Endothelial cell of umbilical vein (primary cell): ENCODE measurements at regions of chr1 and their contacts with region 1.

Region 1: GRCh38 chr1:182781841-182782586 is 7.6 kb upstream of the NPL start:
- DNase-seq: peak; percentile 14
- H3K4me3 ChIP-seq: no peak overlapping the region
- H3K27ac ChIP-seq: no peak overlapping the region
- H3K4me1 ChIP-seq: no peaks in the 10 kb centered on the region
- H3K27me3 ChIP-seq: peaks cover 10 to 20% of the 10 kb centered on the region in 2 experiments
- CTCF ChIP-seq: peak; percentile 41
- POLR2A ChIP-seq: no peak

Region 2: GRCh38 chr1:182446033-182446669 is 335.9 kb before region 1 on chr1:
- CTCF ChIA-PET with region 1: interaction called, 6 read pairs
- POLR2A ChIA-PET with region 1: no interaction called
- dilution Hi-C with region 1: no loop called
- intact Hi-C with region 1: loop called (anchors 1 kb)
- DNase-seq: peak; percentile 38
- H3K4me3 ChIP-seq: no peak overlapping the region
- H3K27ac ChIP-seq: no peak overlapping the region
- H3K4me1 ChIP-seq: no peaks in the 10 kb centered on the region
- H3K27me3 ChIP-seq: no peaks in the 10 kb centered on the region
- CTCF ChIP-seq: peak; percentile 48 to 55
- POLR2A ChIP-seq: no peak

Region 3: DNA sequence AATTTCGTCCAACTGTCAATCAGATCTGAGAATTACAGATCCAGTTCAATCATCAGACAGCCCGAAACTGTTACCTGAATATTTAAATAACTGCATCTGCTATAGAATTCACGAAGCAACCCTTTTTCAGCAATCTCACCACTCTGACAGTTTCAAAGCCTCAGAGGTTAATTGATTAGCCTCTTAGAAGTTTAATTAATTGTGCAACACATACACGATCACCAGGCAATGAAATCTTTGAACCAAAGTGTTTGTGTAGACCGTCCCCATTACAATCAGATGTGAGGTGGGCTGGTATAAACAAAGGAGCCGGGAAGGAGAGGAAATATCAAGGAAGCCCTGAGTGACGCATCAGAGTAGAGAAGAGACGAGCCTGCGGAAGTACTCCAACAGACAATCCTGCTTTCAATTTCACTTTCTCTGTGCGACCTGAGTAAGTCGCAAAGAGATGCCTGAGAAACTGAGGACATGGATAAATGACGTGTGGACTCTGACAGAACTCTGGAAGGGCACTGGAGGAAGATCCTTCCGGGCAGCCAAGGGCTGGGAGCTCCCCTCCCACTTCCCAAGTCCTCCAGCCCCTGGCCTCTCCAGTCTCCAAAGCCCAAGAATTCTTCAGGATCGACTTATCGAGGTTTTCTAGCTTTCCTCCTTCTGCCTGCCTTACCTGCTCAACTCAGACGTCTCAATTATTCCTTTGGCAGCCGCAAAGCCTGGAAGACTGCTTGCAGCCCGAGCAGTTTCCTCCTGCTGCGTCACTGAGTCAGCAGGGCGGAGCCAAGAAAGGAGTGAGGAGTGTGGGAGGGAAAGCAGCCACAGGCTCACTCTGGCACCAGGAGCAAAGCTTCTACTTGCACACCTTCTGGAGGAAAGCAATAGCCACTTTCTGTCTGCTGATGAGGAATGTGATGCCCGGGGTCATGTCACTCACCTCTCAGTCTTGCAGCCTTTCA is 193.2 kb before region 1 on chr1 and contains the start of gene RNASEL:
- CTCF ChIA-PET with region 1: interaction called, 891 read pairs
- POLR2A ChIA-PET with region 1: no interaction called
- dilution Hi-C with region 1: no loop called
- intact Hi-C with region 1: no loop called
- DNase-seq: peak; percentile 53
- H3K4me3 ChIP-seq: peak within 1 kb of the TSS; percentile 53 to 99 (median 95)
- H3K27ac ChIP-seq: peak within 1 kb of the TSS; percentile 71
- H3K4me1 ChIP-seq: peaks cover 9% of the 10 kb centered on the region
- H3K27me3 ChIP-seq: peaks cover 0 to 1% of the 10 kb centered on the region in 2 experiments
- CTCF ChIP-seq: no peak
- POLR2A ChIP-seq: no peak
- total RNA-seq, gene RNASEL: 1.3 and 1.9 TPM in 2 replicates

Region 4: DNA sequence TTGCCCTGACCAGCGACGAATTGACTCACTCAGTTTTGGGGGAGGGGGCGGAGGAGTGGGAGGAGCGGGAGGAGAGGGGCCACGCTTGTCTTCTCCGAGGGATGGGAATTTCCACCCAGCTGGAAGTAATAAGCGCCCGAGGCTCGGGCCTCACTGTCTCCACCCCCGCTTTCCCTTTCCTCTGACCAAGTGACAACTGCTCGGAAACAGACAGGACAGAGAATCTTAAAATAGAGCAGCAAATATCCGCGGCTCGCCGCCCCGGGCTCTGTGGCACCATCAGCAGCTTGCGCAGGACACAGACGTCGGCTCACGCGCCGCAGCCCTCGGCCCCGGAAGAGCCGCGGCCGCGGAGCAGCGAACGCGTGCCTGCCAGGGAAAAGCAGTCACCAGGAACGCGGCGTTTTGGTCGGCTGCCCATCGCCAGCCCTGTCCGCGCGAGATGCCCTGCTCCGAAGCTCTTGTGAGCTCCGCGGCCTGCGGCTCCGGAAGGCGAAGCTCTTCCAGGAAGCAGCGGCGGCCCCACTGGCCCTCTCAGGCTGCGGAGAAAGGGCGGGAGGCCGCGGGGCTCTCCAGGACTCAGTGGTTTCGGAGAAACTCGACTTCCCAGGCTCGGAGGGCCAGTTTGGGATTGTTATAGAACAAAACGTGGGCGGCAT is 167.1 kb before region 1 on chr1:
- CTCF ChIA-PET with region 1: interaction called, 891 read pairs
- POLR2A ChIA-PET with region 1: no interaction called
- dilution Hi-C with region 1: no loop called
- intact Hi-C with region 1: loop called (anchors 5 kb)
- DNase-seq: peak; percentile 55
- H3K4me3 ChIP-seq: peak overlapping the region; percentile 38 to 46 (median 39)
- H3K27ac ChIP-seq: no peak overlapping the region
- H3K4me1 ChIP-seq: peaks cover 11% of the 10 kb centered on the region
- H3K27me3 ChIP-seq: peaks cover 56 to 63% of the 10 kb centered on the region in 2 experiments
- CTCF ChIP-seq: no peak
- POLR2A ChIP-seq: no peak